Posterior cingulate gyrus (tissue), 11 donors: ENCODE measurements at regions of chrX and their contacts with region 1.

Region 1: DNA sequence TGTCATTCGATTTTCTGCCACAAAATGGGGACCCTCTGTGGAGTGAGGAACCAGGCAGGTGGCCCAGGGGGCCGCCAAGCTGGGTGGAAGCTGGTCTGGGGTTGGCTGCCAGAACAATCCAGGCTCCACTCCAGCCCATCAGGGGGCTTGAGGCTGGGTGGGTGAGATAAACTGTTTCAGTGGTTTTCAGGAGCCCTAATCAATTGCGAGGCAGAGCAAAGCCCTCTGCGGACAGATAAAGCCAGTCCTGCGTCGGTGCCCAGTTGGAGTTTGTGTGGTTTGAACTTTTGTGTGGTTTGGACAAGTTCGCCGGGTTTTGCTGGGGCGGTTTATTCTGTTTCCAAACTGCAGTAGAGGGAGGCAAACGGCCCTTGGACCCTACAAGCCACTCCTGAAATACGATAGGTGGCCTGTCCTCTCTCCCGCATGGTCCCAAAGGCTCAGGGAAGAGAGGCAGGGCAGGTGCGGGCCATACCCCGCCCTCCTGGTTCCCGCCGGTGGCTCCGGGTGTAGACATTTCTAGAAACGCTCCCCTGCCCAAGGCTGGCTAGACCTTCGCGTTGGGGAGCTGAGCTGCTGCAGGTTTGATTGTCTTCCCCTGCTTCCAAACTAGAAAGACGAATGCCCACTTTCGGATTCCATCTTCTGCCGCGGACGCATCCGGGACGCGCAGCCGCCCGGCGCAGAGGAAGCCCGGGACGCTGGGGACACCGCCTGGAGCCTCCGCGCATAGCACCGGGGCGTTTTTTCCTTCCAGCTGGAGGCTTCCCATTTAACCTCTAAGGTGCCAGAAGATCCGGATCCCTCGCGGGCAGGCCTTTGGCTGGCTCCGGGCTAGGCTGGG is 169.0 kb upstream of the BCOR start:
- DNase-seq: peak; percentile 50 to 95 (median 67)

Region 2: GRCh38 chrX:39755143-39756032 is 511.3 kb before region 1 on chrX:
- intact Hi-C with region 1: loop called (anchors 10 kb)
- DNase-seq: peak in 8 of 10 donors; percentile 13 to 92 (median 46)

Region 3: GRCh38 chrX:39814391-39814790 is 452.3 kb before region 1 on chrX:
- intact Hi-C with region 1: loop called (anchors 5 kb)
- DNase-seq: no peak

Region 4: DNA sequence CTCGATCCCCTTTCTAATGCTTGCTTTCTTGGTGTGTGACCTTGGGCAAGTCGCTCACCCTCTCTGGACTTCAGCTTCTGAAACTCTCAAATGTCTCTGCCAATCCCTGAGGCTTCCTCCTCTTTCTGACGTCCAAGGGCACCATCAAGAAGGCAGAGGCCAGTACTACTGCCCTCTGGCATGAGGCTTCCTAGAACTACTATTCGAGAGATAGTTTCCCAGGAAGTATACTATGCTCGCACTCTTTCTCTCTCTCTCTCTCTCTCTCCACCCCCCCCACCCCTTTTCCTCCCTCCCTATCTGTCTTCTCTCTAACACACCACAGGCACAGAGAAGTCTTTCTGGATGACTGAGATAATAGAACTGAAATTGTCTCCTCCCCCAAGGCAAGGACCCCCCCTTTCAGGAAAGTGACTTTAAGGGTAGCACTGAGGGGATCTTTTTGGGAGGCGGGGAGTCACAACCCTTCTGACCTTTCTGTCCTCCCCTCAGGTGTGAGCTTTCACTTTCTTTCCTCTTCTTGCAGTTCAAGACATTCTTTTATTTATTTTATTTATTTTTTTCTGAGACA is 148.9 kb before region 1 on chrX:
- intact Hi-C with region 1: no loop called
- DNase-seq: no peak

Region 5: DNA sequence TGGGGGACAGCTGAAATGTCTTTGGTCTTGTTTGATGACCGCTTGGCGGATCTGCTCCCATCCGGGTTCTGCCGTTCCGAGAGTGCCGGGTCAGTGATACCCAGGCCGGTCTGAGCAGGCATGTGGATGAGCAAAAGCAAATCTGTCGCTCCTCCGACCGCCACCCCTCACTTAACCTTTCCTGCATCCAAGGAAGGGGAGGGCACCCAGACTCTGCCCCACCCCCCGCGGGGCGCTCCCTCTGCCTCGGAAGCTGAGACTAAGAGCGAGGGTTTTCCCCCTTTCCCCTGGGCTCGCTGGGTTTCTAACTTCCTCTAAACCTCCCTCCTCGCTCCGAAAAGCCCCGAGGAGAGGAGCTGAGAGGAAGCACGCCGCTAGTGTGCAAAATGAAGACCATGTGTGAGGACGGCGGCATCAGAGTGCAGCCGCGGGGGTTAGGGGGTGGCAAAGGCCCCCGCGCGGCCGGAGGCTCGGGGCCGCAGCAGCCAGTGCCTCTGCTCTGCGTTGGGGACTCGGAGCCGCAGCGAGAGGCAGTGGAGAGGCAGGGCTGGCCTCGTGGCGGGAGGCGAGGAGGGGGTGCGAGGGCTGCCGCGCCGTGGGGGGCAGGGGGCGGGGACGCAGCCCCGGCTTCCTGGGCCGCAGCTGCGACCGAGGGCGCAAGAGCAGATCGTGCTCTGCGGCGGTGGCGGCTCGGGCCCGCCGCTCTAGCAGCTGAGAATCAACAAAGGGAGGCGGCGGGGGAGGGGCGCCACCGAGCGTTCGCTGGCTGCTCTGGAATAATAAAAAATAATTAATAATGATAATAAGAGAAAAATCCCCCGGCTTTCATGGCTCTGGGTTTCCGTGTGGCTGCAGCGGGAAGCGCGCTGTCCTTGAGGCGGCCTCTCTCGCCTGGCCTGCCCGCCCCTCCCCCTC is 113.1 kb before region 1 on chrX:
- intact Hi-C with region 1: loop called (anchors 5 kb)
- DNase-seq: peak in 5 of 10 donors; percentile 19 to 93 (median 67)

Region 6: DNA sequence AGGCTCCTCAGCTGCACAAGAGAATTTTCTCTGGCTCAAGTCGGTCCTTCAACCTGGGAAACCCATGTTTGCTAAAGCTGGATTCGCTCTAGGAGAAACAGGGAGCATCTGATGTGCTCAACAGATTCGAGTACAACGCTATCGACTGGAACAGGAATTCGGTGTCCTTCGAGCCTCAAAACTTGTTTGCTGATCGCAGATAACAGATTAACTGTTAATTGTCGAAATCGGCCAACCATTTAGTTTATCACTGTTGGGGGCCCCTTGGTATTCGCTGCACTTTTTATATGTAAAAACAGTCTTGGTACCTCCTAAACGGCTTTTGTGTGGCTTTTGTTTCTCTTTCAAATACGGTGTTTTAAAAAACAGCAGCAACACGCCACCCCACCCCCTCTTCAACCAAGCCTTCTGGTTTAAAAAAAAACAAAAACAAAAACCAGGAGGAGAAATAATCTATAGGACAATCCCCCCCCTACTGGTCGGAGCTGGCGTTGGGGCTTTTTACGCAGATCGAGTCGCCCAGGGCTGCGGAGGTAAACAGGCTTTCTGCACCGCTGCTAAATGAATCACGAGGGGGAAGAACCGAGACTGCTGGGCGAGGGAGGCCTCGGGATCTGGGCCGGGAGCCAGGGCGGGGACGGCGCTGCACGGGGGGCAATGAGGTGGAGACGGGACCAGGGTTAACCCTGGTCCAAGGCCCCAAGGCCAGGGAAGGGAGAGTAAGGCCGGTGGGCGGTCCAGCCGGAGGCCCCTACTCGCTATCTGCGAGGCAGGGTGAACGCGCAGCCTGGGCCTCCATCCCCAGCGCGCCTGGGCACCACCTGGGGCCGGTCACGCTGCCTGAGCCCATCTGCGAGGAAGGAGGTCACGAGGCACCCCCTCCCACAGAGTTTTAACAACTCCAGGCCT is 97.3 kb before region 1 on chrX:
- intact Hi-C with region 1: loop called (anchors 5 kb)
- DNase-seq: peak in 2 of 10 donors; percentile 55 to 68